ENCODE measurements at regions of chr3 and their contacts with region 1.

Region 1: GRCh38 chr3:127672516-127673190 is at the start of gene ABTB1:
- DNase-seq: peak; percentile 74 to 80 (median 76)
- H3K4me3 ChIP-seq: peak within 1 kb of the TSS; percentile 65 to 91 (median 69)
- H3K4me3 Mint-ChIP-seq: peak within 1 kb of the TSS; percentile 86 to 93
- H3K27ac ChIP-seq: peak within 1 kb of the TSS; percentile 38 to 96
- H3K27ac Mint-ChIP-seq: peak within 1 kb of the TSS; percentile 79 to 94 (median 89)
- H3K4me1 ChIP-seq: peaks cover 33 to 47% of the 10 kb centered on the region in 2 donors
- H3K4me1 Mint-ChIP-seq: peaks cover 47% of the 10 kb centered on the region
- H3K27me3 ChIP-seq: no peaks in the 10 kb centered on the region
- H3K27me3 Mint-ChIP-seq: peaks cover 1 to 3% (median 1%) of the 10 kb centered on the region in 3 donors
- CTCF ChIP-seq: no peak
- polyA plus RNA-seq, gene ABTB1: 107 to 246 (median 118) TPM

Region 2: DNA sequence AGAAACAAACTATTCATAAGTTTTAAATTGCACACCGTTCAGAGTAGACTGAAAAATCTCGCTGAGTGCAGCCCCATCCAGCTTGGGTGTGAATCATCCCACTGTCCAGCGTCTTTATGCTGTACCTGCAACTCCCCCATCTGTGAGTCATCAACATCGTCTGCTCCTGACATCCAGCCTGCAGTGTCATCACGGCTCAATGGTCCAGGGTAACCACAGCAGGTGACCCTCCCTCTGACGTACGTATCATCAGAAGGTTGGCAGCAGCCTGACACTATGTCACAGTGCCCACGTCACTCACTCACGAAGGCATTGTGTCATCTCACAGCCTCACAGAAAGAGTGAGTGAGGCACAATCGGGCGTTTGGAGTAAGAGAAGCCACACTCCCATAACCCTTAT is 147.3 kb before region 1 on chr3:
- intact Hi-C with region 1: no loop called
- DNase-seq: no peak
- H3K4me3 ChIP-seq: no peak overlapping the region
- H3K4me3 Mint-ChIP-seq: no peak overlapping the region
- H3K27ac ChIP-seq: no peak overlapping the region
- H3K27ac Mint-ChIP-seq: no peak overlapping the region
- H3K4me1 ChIP-seq: no peaks in the 10 kb centered on the region
- H3K4me1 Mint-ChIP-seq: peaks cover 9% of the 10 kb centered on the region
- H3K27me3 ChIP-seq: peaks cover 0 to 6% of the 10 kb centered on the region in 2 donors
- H3K27me3 Mint-ChIP-seq: peaks cover 12 to 35% (median 29%) of the 10 kb centered on the region in 3 donors
- CTCF ChIP-seq: no peak

Region 3: GRCh38 chr3:127574880-127575878 is 97.5 kb before region 1 on chr3:
- intact Hi-C with region 1: no loop called
- DNase-seq: peak; percentile 80 to 88 (median 85)
- H3K4me3 ChIP-seq: no peak overlapping the region
- H3K4me3 Mint-ChIP-seq: no peak overlapping the region
- H3K27ac ChIP-seq: no peak overlapping the region
- H3K27ac Mint-ChIP-seq: peak overlapping the region in 4 of 7 donors; percentile 36 to 50 (median 44)
- H3K4me1 ChIP-seq: peaks cover 3 to 5% of the 10 kb centered on the region in 2 donors
- H3K4me1 Mint-ChIP-seq: peaks cover 6% of the 10 kb centered on the region
- H3K27me3 ChIP-seq: no peaks in the 10 kb centered on the region
- H3K27me3 Mint-ChIP-seq: peaks cover 0 to 1% (median 0%) of the 10 kb centered on the region in 3 donors
- CTCF ChIP-seq: peak; percentile 90

Region 4: GRCh38 chr3:127598841-127599570 is 73.6 kb before region 1 on chr3:
- intact Hi-C with region 1: loop called (anchors 5 kb)
- DNase-seq: no peak
- H3K4me3 ChIP-seq: peak overlapping the region in 2 of 3 experiments; percentile 49 to 77
- H3K4me3 Mint-ChIP-seq: peak overlapping the region; percentile 82 to 88
- H3K27ac ChIP-seq: peak overlapping the region in 1 of 2 donors; percentile 66
- H3K27ac Mint-ChIP-seq: peak overlapping the region in 6 of 7 donors; percentile 82 to 96 (median 88)
- H3K4me1 ChIP-seq: peaks cover 12 to 22% of the 10 kb centered on the region in 2 donors
- H3K4me1 Mint-ChIP-seq: peaks cover 23% of the 10 kb centered on the region
- H3K27me3 ChIP-seq: no peaks in the 10 kb centered on the region
- H3K27me3 Mint-ChIP-seq: peaks cover 0 to 3% (median 0%) of the 10 kb centered on the region in 3 donors
- CTCF ChIP-seq: no peak

Region 5: GRCh38 chr3:127710155-127710941 is 37.7 kb after region 1 on chr3:
- intact Hi-C with region 1: no loop called
- DNase-seq: no peak
- H3K4me3 ChIP-seq: no peak overlapping the region
- H3K4me3 Mint-ChIP-seq: no peak overlapping the region
- H3K27ac ChIP-seq: no peak overlapping the region
- H3K27ac Mint-ChIP-seq: no peak overlapping the region
- H3K4me1 ChIP-seq: peaks cover under 1 to 3% of the 10 kb centered on the region in 2 donors
- H3K4me1 Mint-ChIP-seq: peaks cover 4% of the 10 kb centered on the region
- H3K27me3 ChIP-seq: no peaks in the 10 kb centered on the region
- H3K27me3 Mint-ChIP-seq: peaks cover 0 to 2% (median 0%) of the 10 kb centered on the region in 3 donors
- CTCF ChIP-seq: no peak

Region 6: GRCh38 chr3:128051837-128052594 is 379.4 kb after region 1 on chr3 and contains the start of gene SEC61A1:
- intact Hi-C with region 1: loop called in 1 of 2 experiments (anchors 10 kb)
- DNase-seq: peak; percentile 90 to 92 (median 90)
- H3K4me3 ChIP-seq: peak within 1 kb of the TSS; percentile 82 to 97 (median 86)
- H3K4me3 Mint-ChIP-seq: peak within 1 kb of the TSS; percentile 91 to 96
- H3K27ac ChIP-seq: peak within 1 kb of the TSS; percentile 85 to 89
- H3K27ac Mint-ChIP-seq: peak within 1 kb of the TSS; percentile 91 to 98 (median 94)
- H3K4me1 ChIP-seq: peaks cover 28 to 36% of the 10 kb centered on the region in 2 donors
- H3K4me1 Mint-ChIP-seq: peaks cover 40% of the 10 kb centered on the region
- H3K27me3 ChIP-seq: peaks cover 0 to 2% of the 10 kb centered on the region in 2 donors
- H3K27me3 Mint-ChIP-seq: peaks cover 3 to 9% (median 7%) of the 10 kb centered on the region in 3 donors
- CTCF ChIP-seq: no peak
- polyA plus RNA-seq, gene SEC61A1: 62.8 to 136 (median 114) TPM